ENCODE measurements at regions of chr6 and their contacts with region 1.

Region 1: GRCh38 chr6:54074578-54075195 is 36.6 kb upstream of the MLIP start:
- DNase-seq: peak; percentile 17
- H3K4me3 ChIP-seq: no peak overlapping the region
- H3K27me3 ChIP-seq: no peaks in the 10 kb centered on the region
- CTCF ChIP-seq: no peak

Region 2: GRCh38 chr6:54173089-54173488 is 98.4 kb after region 1 on chr6:
- CTCF ChIA-PET with region 1: no interaction called
- POLR2A ChIA-PET with region 1: interaction called, 12 read pairs
- DNase-seq: peak; percentile 3
- H3K4me3 ChIP-seq: no peak overlapping the region
- H3K27me3 ChIP-seq: no peaks in the 10 kb centered on the region
- CTCF ChIP-seq: no peak

Measured in BJ (cell line).